ENCODE measurements at regions of chr5 and their contacts with region 1.

Region 1: DNA sequence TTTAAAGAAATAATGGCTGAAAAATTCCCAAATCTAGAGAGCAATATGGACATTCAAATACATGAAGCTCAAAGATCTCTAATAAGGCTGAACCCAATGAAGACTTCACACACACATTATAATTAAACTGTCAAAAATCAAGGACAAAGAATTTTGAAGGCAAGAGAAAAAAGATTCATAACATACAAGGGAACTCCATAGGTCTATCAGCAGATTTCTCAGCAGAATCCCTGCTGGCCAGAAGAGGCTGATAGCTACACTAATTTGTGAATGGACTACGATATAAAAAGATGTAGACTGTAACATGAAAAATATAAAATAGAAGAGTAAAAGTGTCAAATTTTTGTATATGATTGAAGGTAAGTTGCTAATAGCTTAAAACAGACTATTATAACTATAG is 251.9 kb downstream of the ADAMTS6 start:
- DNase-seq: no peak
- H3K4me3 ChIP-seq: no peak overlapping the region
- H3K4me3 Mint-ChIP-seq: no peak overlapping the region
- H3K27ac Mint-ChIP-seq: no peak overlapping the region
- H3K4me1 ChIP-seq: no peaks in the 10 kb centered on the region
- H3K4me1 Mint-ChIP-seq: no peaks in the 10 kb centered on the region
- H3K27me3 ChIP-seq: no peaks in the 10 kb centered on the region
- H3K27me3 Mint-ChIP-seq: peaks cover 1% of the 10 kb centered on the region
- CTCF ChIP-seq: no peak

Region 2: GRCh38 chr5:65271906-65272305 is 42.1 kb after region 1 on chr5:
- CTCF ChIA-PET with region 1: no interaction called
- POLR2A ChIA-PET with region 1: no interaction called
- intact Hi-C with region 1: loop called (anchors 10 kb)
- DNase-seq: no peak
- H3K4me3 ChIP-seq: no peak overlapping the region
- H3K4me3 Mint-ChIP-seq: no peak overlapping the region
- H3K27ac Mint-ChIP-seq: no peak overlapping the region
- H3K4me1 ChIP-seq: no peaks in the 10 kb centered on the region
- H3K4me1 Mint-ChIP-seq: no peaks in the 10 kb centered on the region
- H3K27me3 ChIP-seq: no peaks in the 10 kb centered on the region
- H3K27me3 Mint-ChIP-seq: peaks cover 4% of the 10 kb centered on the region
- CTCF ChIP-seq: no peak